ENCODE measurements at regions of chr7 and their contacts with region 1.

Region 1: GRCh38 chr7:101542527-101543241 is 86.4 kb downstream of the MYL10 start:
- DNase-seq: peak; percentile 64
- ATAC-seq: peak; percentile 60 to 76
- H3K4me3 ChIP-seq: no peak overlapping the region
- H3K27ac ChIP-seq: no peak overlapping the region
- H3K4me1 ChIP-seq: no peaks in the 10 kb centered on the region
- H3K27me3 ChIP-seq: no peaks in the 10 kb centered on the region
- CTCF ChIP-seq: peak; percentile 94

Region 2: DNA sequence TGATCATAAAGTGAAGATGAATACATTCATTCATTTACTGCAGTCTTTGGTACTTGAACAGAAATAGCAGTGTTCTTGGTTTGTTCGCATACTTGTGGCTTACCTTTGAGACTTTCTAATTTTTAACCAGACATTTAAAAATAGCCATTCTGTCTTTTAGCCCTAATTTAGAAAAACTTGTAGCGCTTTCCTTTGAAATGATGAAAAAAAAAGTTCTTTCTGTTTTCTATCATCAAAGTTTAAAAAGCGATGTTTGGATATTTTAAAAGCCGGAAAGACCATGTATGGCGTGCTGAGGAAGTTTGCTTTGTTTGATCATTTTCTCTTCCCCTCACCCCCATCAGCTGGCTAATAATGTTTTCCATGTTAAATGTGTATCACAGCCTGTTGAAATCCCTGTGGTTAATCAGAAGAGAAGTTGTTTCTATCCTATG is 391.0 kb after region 1 on chr7:
- intact Hi-C with region 1: no loop called
- DNase-seq: no peak
- ATAC-seq: no peak
- H3K4me3 ChIP-seq: no peak overlapping the region
- H3K27ac ChIP-seq: no peak overlapping the region
- H3K4me1 ChIP-seq: peaks cover 27% of the 10 kb centered on the region
- H3K27me3 ChIP-seq: no peaks in the 10 kb centered on the region
- CTCF ChIP-seq: no peak

Region 3: GRCh38 chr7:102279537-102280400 is 737.1 kb after region 1 on chr7:
- intact Hi-C with region 1: loop called (anchors 10 kb)
- DNase-seq: no peak
- ATAC-seq: peak; percentile 79 to 82
- H3K4me3 ChIP-seq: no peak overlapping the region
- H3K27ac ChIP-seq: no peak overlapping the region
- H3K4me1 ChIP-seq: peaks cover 9% of the 10 kb centered on the region
- H3K27me3 ChIP-seq: no peaks in the 10 kb centered on the region
- CTCF ChIP-seq: peak; percentile 82

Measured in lower lobe of right lung (tissue), 2 donors.